ENCODE measurements at regions of chr10 and their contacts with region 1.

Region 1: GRCh38 chr10:99172130-99172738 is 63.4 kb downstream of the HPSE2 start:
- DNase-seq: peak in 1 of 2 donors; percentile 65
- H3K4me3 ChIP-seq: no peak overlapping the region
- H3K27ac ChIP-seq: no peak overlapping the region
- H3K4me1 ChIP-seq: no peaks in the 10 kb centered on the region
- H3K27me3 ChIP-seq: no peaks in the 10 kb centered on the region
- CTCF ChIP-seq: peak; percentile 44 to 56 (median 51)

Region 2: GRCh38 chr10:98467506-98468346 is 704.5 kb before region 1 on chr10:
- intact Hi-C with region 1: loop called (anchors 2 kb)
- DNase-seq: peak in 1 of 2 donors; percentile 87
- H3K4me3 ChIP-seq: peak overlapping the region; percentile 59 to 68
- H3K27ac ChIP-seq: no peak overlapping the region
- H3K4me1 ChIP-seq: peaks cover 0 to 3% of the 10 kb centered on the region in 2 donors
- H3K27me3 ChIP-seq: no peaks in the 10 kb centered on the region
- CTCF ChIP-seq: peak; percentile 76 to 88 (median 78)

Region 3: GRCh38 chr10:98790802-98791201 is 381.4 kb before region 1 on chr10:
- intact Hi-C with region 1: loop called (anchors 5 kb)
- DNase-seq: no peak
- H3K4me3 ChIP-seq: no peak overlapping the region
- H3K27ac ChIP-seq: no peak overlapping the region
- H3K4me1 ChIP-seq: no peaks in the 10 kb centered on the region
- H3K27me3 ChIP-seq: no peaks in the 10 kb centered on the region
- CTCF ChIP-seq: peak in 2 of 3 experiments; percentile 23 to 39

Measured in ascending aorta (tissue), 2 donors.